Common myeloid progenitor, CD34-positive (primary cell): ENCODE measurements at regions of chr9 and their contacts with region 1.

Region 1: GRCh38 chr9:32142074-32142473 is 242.4 kb upstream of the ACO1 start:
- DNase-seq: no peak
- H3K4me3 ChIP-seq: no peak overlapping the region
- H3K27ac ChIP-seq: no peak overlapping the region
- H3K4me1 ChIP-seq: no peaks in the 10 kb centered on the region
- H3K27me3 ChIP-seq: no peaks in the 10 kb centered on the region

Region 2: DNA sequence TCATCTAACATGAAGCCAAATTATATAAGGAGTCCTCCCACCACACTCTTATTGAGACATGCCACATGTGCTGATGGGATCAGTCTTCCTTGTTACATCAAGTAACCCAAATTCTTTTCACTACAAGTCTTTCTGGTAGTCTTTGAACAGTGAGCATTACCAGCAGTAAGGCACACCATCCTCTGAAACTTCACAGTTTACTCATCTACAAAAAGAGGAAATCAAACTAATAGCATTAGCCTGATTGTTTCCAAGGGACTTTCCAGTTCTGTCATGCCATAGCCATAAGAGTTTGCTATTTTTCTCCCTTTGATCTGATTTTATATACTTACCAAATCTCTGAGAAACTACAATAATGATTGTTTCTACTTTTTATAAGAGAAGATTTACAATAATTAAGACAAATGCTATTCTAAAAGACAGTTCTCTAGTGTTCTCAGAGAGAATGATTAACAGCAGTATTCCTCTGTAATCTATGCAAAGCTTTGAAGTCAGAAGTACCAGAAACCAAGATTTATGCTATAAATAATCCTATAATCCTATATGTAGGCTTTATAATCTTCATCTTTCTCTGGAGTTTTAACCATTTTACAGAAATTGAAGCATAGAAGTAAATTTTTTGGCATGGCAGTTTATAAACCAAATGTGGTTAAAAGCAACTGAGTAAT is 76.2 kb after region 1 on chr9:
- CTCF ChIA-PET with region 1: no interaction called
- POLR2A ChIA-PET with region 1: no interaction called
- DNase-seq: peak in 2 of 3 donors; percentile 60 to 65
- H3K4me3 ChIP-seq: no peak overlapping the region
- H3K27ac ChIP-seq: no peak overlapping the region
- H3K4me1 ChIP-seq: no peaks in the 10 kb centered on the region
- H3K27me3 ChIP-seq: no peaks in the 10 kb centered on the region

Region 3: GRCh38 chr9:32251539-32251938 is 109.5 kb after region 1 on chr9:
- CTCF ChIA-PET with region 1: interaction called, 15 read pairs
- POLR2A ChIA-PET with region 1: no interaction called
- DNase-seq: peak; percentile 40 to 66 (median 58)
- H3K4me3 ChIP-seq: no peak overlapping the region
- H3K27ac ChIP-seq: no peak overlapping the region
- H3K4me1 ChIP-seq: peaks cover 0 to 5% (median 0%) of the 10 kb centered on the region in 4 experiments
- H3K27me3 ChIP-seq: no peaks in the 10 kb centered on the region